ENCODE measurements at regions of chr5 and their contacts with region 1.

Region 1: DNA sequence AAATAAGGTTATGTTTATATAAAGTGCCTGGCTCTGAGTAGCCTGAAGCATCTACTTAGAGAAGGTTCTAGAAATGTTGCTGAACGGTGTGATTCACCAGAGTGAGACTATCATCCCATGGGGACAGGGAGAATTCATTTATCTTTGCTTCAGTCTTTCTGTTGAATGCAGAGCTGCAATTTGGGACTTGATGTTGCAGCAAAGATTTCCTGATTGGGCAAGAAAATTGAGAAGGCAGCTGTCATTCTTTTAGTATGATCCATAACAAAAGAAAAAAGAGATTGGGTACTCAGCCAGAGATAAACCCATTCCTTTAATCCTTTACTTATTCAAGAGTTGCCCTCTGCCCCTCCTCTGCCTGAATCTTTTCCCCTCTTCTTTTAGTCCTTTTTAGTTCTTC is 456.3 kb upstream of the WWC1 start:
- DNase-seq: no peak

Region 2: DNA sequence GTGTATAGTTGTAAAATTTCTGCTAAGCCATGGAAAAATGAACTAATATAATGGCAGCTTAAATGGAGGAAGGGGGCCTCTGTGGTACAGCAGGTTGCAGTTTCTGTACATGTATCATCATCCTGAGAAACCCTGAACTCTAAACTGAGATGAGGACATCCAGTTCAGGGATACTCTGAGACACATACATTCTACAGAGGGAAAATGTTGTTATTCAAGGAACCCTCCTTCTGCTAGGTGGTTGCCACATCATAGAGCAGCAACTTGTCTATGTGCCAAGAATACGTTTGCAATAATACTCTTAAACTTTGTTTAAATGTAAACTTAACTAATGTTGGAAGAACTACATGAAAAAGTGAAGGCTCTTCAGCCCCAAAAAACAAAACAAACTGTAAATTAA is 854.5 kb before region 1 on chr5:
- intact Hi-C with region 1: loop called in 1 of 2 experiments (anchors 10 kb)
- DNase-seq: no peak

Region 3: GRCh38 chr5:167623354-167623753 is 211.8 kb before region 1 on chr5:
- intact Hi-C with region 1: no loop called
- DNase-seq: no peak

Measured in posterior vena cava (tissue), 2 donors.